Aorta (tissue), 5 donors: ENCODE measurements at regions of chr2 and their contacts with region 1.

Region 1: GRCh38 chr2:96638144-96639121 is at the start of gene KANSL3:
- DNase-seq: peak; percentile 95 to 96
- ATAC-seq: peak; percentile 96
- H3K4me3 ChIP-seq: peak within 1 kb of the TSS; percentile 58 to 77
- H3K27ac ChIP-seq: peak within 1 kb of the TSS; percentile 85 to 88
- H3K4me1 ChIP-seq: no peaks in the 10 kb centered on the region
- H3K27me3 ChIP-seq: no peaks in the 10 kb centered on the region
- total RNA-seq, gene KANSL3: 49.9 to 63.0 TPM

Region 2: DNA sequence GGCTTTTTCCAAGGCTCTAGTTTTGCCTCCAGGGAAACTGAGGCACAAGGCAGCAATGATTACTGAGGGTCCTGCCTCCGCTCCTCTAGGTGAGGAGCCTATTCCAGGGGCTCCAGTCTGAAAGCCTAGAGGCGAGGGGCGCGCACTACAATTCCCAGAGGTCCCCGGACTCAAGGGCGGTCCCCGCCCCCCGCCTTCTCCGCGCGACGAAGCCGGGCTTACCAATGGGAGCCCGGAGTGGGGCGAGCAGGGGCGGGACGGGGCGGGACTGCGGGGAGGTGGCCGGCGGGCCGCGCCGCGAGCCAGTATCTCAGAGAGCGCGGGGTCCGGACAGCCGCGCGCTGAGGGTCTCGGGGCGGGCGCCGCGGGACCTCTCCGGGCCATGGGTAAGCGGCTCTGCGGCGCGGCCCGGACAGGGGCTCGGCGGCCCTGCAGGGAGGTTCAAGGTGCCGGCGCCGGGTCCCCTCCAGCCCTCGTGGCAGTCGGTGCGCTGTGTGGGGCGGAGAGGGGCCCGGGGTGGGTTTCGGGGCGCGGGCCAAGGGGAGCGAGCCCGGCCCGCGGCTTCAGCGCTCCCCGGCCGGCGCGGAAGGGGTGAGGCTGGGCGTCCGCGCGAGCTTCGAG is 101.9 kb before region 1 on chr2 and contains the start of gene ARID5A:
- intact Hi-C with region 1: loop called in 1 of 2 experiments (anchors 10 kb)
- DNase-seq: peak; percentile 98
- ATAC-seq: peak; percentile 81
- H3K4me3 ChIP-seq: peak within 1 kb of the TSS; percentile 59 to 90
- H3K27ac ChIP-seq: peak within 1 kb of the TSS; percentile 24 to 75
- H3K4me1 ChIP-seq: peaks cover 4 to 6% of the 10 kb centered on the region in 2 donors
- H3K27me3 ChIP-seq: no peaks in the 10 kb centered on the region
- total RNA-seq, gene ARID5A: 107 to 257 TPM

Region 3: GRCh38 chr2:96608469-96609455 is 29.7 kb before region 1 on chr2:
- intact Hi-C with region 1: no loop called
- DNase-seq: no peak
- ATAC-seq: no peak
- H3K4me3 ChIP-seq: no peak overlapping the region
- H3K27ac ChIP-seq: no peak overlapping the region
- H3K4me1 ChIP-seq: no peaks in the 10 kb centered on the region
- H3K27me3 ChIP-seq: no peaks in the 10 kb centered on the region

Region 4: GRCh38 chr2:96665083-96665569 is 26.7 kb after region 1 on chr2:
- intact Hi-C with region 1: loop called in 1 of 2 experiments (anchors 1 kb)
- DNase-seq: peak; percentile 79 to 82
- ATAC-seq: peak; percentile 82
- H3K4me3 ChIP-seq: no peak overlapping the region
- H3K27ac ChIP-seq: peak overlapping the region in 1 of 2 donors; percentile 88
- H3K4me1 ChIP-seq: no peaks in the 10 kb centered on the region
- H3K27me3 ChIP-seq: no peaks in the 10 kb centered on the region

Region 5: DNA sequence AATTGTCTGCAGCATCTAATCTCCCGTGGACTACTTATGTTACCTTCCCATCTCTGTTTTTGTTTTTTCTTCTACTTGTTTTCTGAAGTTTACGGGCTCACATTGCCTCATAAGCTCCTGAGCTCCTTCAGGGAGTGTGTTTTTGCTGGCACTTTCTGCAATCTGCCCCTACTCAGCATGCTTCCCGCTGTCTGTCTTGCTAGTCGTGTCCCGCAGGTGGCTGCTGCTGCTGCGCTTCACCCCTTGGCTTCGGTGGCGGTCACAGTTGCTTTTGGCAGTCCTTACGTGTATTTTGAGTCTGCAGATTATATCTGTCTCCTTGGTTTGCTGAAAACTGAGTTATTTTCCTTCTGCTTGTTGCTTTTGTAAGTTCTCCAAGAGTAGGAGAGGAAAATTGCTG is 41.4 kb after region 1 on chr2:
- intact Hi-C with region 1: loop called in 1 of 2 experiments (anchors 5 kb)
- DNase-seq: no peak
- ATAC-seq: no peak
- H3K4me3 ChIP-seq: no peak overlapping the region
- H3K27ac ChIP-seq: no peak overlapping the region
- H3K4me1 ChIP-seq: no peaks in the 10 kb centered on the region
- H3K27me3 ChIP-seq: no peaks in the 10 kb centered on the region

Region 6: DNA sequence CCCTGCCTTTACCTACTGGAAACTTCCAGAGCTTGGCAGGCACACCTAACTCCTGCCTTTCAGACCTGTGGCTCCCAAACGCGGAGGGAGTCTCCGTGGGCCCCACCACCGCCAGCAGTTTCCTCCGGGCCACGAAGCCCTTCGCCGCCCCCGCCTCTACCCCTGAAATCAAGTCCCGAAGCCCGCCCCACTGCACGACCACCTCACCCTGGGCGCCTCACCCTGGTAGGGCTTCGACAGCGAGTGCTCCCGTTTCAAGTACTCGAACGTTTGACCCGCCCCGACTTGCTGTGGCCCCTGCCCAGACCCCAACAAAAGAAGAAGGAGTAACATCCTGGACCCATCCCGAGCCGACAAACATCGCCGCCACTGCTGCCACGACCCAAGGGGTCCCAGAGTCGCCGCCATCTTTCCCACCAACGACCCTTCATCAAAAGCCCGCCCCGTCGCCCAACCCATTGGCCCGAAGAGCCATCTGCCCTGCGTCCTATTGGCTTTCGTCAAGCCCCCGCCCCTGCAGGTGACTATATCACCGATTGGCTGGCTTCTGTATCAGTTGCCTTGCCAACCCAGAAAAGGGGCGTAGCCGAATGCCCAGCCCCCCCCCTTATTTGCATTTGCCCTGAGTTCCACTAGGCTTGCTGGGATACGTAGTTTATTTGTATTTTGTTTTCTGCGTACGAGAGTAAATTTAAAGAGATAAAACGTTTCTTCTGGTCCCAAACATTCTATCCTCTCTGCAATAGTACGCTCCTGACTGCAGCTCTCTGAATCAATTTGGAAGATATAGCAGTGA is 101.4 kb after region 1 on chr2 and contains the start of gene LMAN2L:
- intact Hi-C with region 1: loop called (anchors 5 kb)
- DNase-seq: peak; percentile 98 to 99
- ATAC-seq: peak; percentile 98
- H3K4me3 ChIP-seq: peak within 1 kb of the TSS; percentile 56 to 79
- H3K27ac ChIP-seq: peak within 1 kb of the TSS in 1 of 2 donors; percentile 8
- H3K4me1 ChIP-seq: no peaks in the 10 kb centered on the region
- H3K27me3 ChIP-seq: no peaks in the 10 kb centered on the region
- total RNA-seq, gene LMAN2L: 11.3 to 15.7 TPM

Region 7: DNA sequence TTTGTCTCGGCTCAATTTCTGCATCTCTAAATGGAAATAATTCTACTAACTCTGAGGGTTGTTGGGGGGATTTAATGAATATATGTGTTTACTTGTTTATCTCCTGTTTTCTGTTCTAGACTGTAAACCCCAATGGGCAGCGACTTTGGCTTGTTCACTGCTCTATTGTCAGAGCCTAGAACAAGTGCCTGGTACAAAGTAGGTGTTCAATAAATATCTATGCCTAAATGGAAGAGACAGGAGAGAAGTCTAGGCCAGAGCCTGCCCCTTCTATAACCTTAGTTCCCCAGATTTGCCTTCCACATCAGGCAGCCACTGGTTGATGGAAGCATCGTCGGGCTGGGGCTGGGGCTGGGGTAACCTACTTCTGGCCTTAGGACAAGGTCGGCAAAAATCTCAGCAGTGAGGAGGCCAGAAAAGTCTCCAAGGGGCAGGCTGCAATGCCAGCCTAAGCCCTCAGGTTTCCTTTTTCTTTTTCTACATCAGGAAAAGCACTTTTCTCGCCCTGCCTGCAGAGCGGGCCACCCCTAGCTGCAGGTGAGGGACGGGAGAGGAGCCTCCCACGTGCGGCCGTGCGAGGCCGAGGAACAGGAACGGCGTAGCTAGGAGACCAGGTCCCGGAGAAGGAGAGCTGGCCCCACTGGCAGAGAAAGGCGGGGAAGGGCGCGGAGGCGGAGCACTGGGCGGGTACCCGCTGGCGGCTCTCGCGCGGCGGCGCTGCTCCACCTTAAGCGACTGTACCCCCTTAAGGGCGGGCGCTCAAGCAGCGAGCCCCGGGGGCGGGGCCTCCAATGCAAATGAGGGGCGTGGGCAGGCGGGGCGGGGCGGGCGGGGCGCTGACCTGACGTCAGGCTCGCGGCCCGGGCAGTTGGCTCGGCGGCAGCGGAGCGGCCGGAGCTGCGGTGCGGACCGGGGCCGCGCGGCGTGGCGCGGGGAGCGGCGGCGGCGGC is 121.9 kb after region 1 on chr2 and contains the start of gene CNNM4:
- intact Hi-C with region 1: loop called (anchors 5 to 10 kb)
- DNase-seq: peak; percentile 97 to 98
- ATAC-seq: peak; percentile 95
- H3K4me3 ChIP-seq: peak within 1 kb of the TSS; percentile 3 to 72
- H3K27ac ChIP-seq: peak within 1 kb of the TSS in 1 of 2 donors; percentile 22
- H3K4me1 ChIP-seq: peaks cover 0 to 5% of the 10 kb centered on the region in 2 donors
- H3K27me3 ChIP-seq: peaks cover 0 to 1% of the 10 kb centered on the region in 2 donors
- total RNA-seq, gene CNNM4: 7.8 to 8.1 TPM